PC-9 (cell line): ENCODE measurements at regions of chr10 and their contacts with region 1.

Region 1: DNA sequence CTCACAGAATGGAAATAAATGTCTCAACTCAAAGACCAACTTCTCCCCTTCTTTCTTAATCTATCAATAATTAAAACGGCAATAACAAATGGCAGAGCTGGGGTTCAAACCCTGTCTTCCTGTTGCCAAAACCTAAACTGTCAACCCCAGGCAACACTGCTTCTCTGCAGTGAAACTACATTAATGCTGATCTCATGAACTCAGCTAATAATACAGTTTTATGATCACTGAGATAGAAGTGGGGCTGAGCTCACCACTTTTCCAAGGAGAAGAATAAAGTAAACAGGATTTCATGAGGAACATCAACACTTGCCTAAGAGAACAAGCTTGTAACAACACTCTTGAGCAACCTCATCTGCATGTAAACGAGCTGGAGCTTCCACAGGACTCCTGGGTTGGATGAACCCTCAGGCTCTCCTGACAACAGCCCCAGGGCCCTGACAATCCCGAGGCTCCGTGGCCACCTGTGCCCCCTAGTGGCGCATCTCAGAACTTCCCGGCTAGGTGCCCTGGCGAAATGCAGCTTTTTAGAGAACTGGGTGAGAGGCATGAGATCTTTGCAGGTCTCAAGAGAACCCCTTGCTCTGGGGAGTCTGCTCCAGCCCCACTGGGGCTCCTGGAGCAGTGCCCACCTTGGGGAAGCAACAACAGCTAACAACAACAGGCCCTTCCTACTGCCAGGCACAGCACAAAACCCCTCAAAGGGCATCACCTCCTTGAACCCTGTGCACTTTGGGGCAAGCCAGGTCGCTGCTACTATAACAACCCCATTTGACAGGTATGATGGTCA is 169.3 kb downstream of the SH3PXD2A start:
- DNase-seq: peak; percentile 41 to 61
- H3K4me3 ChIP-seq: no peak overlapping the region
- H3K27ac ChIP-seq: no peak overlapping the region
- H3K4me1 ChIP-seq: 0 out of 2 replicates have a peak, but pooled peaks cover 3% of the 10 kb centered on the region
- H3K27me3 ChIP-seq: no peaks in the 10 kb centered on the region
- CTCF ChIP-seq: peak; percentile 90

Region 2: GRCh38 chr10:103102195-103102594 is 583.9 kb before region 1 on chr10:
- CTCF ChIA-PET with region 1: no interaction called
- POLR2A ChIA-PET with region 1: no interaction called
- intact Hi-C with region 1: no loop called
- DNase-seq: no peak
- H3K4me3 ChIP-seq: no peak overlapping the region
- H3K27ac ChIP-seq: no peak overlapping the region
- H3K4me1 ChIP-seq: 0 out of 2 replicates have a peak, but pooled peaks cover 7% of the 10 kb centered on the region
- H3K27me3 ChIP-seq: no peaks in the 10 kb centered on the region
- CTCF ChIP-seq: no peak

Region 3: GRCh38 chr10:103244663-103245271 is 441.3 kb before region 1 on chr10:
- CTCF ChIA-PET with region 1: no interaction called
- POLR2A ChIA-PET with region 1: no interaction called
- intact Hi-C with region 1: no loop called
- DNase-seq: peak; percentile 49 to 58
- H3K4me3 ChIP-seq: no peak overlapping the region
- H3K27ac ChIP-seq: no peak overlapping the region
- H3K4me1 ChIP-seq: peaks cover 40% of the 10 kb centered on the region
- H3K27me3 ChIP-seq: no peaks in the 10 kb centered on the region
- CTCF ChIP-seq: peak; percentile 83

Region 4: DNA sequence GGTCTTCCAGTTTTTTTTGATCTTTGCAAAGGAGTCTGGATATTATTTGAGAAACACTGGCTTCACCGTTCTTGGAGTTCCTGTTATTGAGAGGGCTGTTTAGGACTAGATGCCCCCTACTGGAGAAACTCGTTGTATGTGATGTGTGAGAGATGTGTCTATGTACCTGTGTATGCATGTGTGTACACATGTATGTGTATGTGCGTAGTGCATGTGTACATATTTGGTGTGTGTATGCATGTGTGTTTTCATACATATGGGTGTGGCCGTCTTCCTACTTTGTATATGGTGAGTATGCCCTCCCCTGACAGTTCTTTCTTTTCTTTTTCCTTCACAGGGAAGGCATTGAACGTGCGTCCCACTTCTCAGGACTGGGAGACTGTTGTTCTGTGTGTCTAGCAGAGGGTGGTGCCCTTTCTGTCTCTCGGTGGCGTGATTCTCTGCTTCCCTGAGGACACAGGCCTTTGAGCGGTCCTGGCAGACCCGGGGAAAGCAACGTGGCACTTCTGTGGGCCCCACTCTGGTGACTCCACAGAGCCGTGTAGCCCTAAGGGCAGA is 204.0 kb before region 1 on chr10:
- CTCF ChIA-PET with region 1: no interaction called
- POLR2A ChIA-PET with region 1: no interaction called
- intact Hi-C with region 1: loop called (anchors 10 kb)
- DNase-seq: peak in 1 of 2 experiments; percentile 20
- H3K4me3 ChIP-seq: no peak overlapping the region
- H3K27ac ChIP-seq: no peak overlapping the region
- H3K4me1 ChIP-seq: peaks cover 39% of the 10 kb centered on the region
- H3K27me3 ChIP-seq: no peaks in the 10 kb centered on the region
- CTCF ChIP-seq: peak; percentile 70

Region 5: GRCh38 chr10:103598654-103599115 is 87.4 kb before region 1 on chr10:
- CTCF ChIA-PET with region 1: no interaction called
- POLR2A ChIA-PET with region 1: no interaction called
- intact Hi-C with region 1: loop called (anchors 1 kb)
- DNase-seq: peak; percentile 35 to 42
- H3K4me3 ChIP-seq: no peak overlapping the region
- H3K27ac ChIP-seq: no peak overlapping the region
- H3K4me1 ChIP-seq: no peaks in the 10 kb centered on the region
- H3K27me3 ChIP-seq: no peaks in the 10 kb centered on the region
- CTCF ChIP-seq: peak; percentile 68

Region 6: GRCh38 chr10:104246976-104247375 is 560.9 kb after region 1 on chr10:
- CTCF ChIA-PET with region 1: no interaction called
- POLR2A ChIA-PET with region 1: no interaction called
- intact Hi-C with region 1: no loop called
- DNase-seq: no peak
- H3K4me3 ChIP-seq: no peak overlapping the region
- H3K27ac ChIP-seq: no peak overlapping the region
- H3K4me1 ChIP-seq: no peaks in the 10 kb centered on the region
- H3K27me3 ChIP-seq: no peaks in the 10 kb centered on the region
- CTCF ChIP-seq: no peak